ENCODE measurements at regions of chr17 and their contacts with region 1.

Region 1: GRCh38 chr17:68435876-68436842 is 21.1 kb downstream of the WIPI1 start:
- DNase-seq: peak; percentile 71 to 91 (median 87)
- ATAC-seq: peak; percentile 83
- H3K4me3 ChIP-seq: no peak overlapping the region
- H3K4me3 Mint-ChIP-seq: peak overlapping the region; percentile 51
- H3K27ac ChIP-seq: no peak overlapping the region
- H3K27ac Mint-ChIP-seq: peak overlapping the region; percentile 81
- H3K4me1 ChIP-seq: peaks cover 30% of the 10 kb centered on the region
- H3K4me1 Mint-ChIP-seq: peaks cover 50% of the 10 kb centered on the region
- H3K27me3 ChIP-seq: no peaks in the 10 kb centered on the region
- H3K27me3 Mint-ChIP-seq: no peaks in the 10 kb centered on the region
- CTCF ChIP-seq: peak; percentile 96

Region 2: DNA sequence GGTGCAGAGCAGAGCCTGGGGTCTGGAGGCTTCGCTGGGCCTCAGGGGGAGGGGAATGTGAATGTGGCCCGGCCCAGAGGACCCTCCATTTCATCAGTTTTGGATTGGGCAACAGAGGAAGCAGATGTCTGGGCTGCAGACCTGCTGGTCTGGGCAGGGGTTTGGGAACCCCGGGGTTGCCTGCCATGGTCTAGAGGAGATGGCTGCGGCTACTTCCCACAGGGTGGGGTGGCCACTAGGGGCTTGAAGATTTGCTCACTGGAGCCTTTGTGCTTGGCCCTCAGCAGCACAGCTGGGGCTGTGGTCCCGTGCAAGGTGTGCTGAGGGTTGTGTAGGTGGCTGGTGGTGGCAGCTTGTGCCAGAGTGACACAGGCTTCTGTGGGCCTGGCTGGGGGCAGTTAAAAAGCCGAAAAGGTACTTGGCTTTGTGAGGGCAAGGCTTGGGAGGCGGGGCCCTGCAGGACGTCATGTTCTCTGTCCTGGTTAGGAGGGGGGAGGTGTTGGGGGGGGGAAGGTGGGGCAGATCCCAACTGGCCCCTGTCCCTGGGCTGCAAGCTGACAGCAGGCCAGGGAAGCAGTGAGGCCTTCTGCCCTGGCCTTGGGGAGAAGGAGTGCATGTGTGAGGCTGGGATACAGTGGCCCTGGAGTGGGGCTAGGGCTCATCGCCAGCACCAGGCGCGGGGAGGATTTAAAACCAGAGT is 302.7 kb before region 1 on chr17:
- CTCF ChIA-PET with region 1: no interaction called
- POLR2A ChIA-PET with region 1: no interaction called
- intact Hi-C with region 1: no loop called
- DNase-seq: no peak
- ATAC-seq: no peak
- H3K4me3 ChIP-seq: no peak overlapping the region
- H3K4me3 Mint-ChIP-seq: no peak overlapping the region
- H3K27ac ChIP-seq: no peak overlapping the region
- H3K27ac Mint-ChIP-seq: no peak overlapping the region
- H3K4me1 ChIP-seq: no peaks in the 10 kb centered on the region
- H3K4me1 Mint-ChIP-seq: no peaks in the 10 kb centered on the region
- H3K27me3 ChIP-seq: no peaks in the 10 kb centered on the region
- H3K27me3 Mint-ChIP-seq: no peaks in the 10 kb centered on the region
- CTCF ChIP-seq: no peak

Region 3: DNA sequence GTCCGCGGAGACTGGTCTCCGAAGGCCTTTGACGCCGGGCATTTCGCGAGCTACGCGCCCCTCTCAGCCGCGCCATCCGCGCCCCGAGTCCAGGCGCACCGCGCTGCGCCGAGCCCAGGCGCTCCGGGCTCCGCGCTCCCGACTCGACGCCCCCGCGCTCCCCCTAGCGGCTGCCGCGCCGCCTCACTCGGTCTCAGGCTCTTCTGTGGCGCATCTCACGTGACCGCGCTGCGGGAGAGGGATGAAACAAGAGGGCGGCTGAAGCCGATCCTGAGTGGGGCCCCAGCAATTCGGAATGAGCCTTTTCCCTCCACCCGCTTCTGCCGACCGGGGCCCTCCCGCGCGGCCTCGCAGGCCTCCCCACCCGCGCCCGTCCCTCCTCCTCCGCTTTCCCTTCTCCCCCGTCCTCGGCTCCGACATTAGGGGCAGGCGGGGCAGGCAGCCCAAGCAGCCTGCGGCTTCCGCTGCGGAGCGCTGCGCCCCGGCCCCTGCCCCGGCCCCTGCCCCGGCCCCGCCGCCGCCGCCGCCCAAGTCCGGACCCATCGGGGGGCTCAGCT is 230.8 kb before region 1 on chr17:
- CTCF ChIA-PET with region 1: interaction called, 4 read pairs
- POLR2A ChIA-PET with region 1: interaction called, 7 read pairs
- intact Hi-C with region 1: loop called in 1 of 2 experiments (anchors 2 kb)
- DNase-seq: peak; percentile 87 to 96 (median 93)
- ATAC-seq: peak; percentile 70
- H3K4me3 ChIP-seq: peak overlapping the region; percentile 68 to 78
- H3K4me3 Mint-ChIP-seq: peak overlapping the region; percentile 88
- H3K27ac ChIP-seq: peak overlapping the region; percentile 77 to 78
- H3K27ac Mint-ChIP-seq: peak overlapping the region; percentile 93
- H3K4me1 ChIP-seq: peaks cover 23% of the 10 kb centered on the region
- H3K4me1 Mint-ChIP-seq: peaks cover 37% of the 10 kb centered on the region
- H3K27me3 ChIP-seq: no peaks in the 10 kb centered on the region
- H3K27me3 Mint-ChIP-seq: no peaks in the 10 kb centered on the region
- CTCF ChIP-seq: peak; percentile 89

Region 4: DNA sequence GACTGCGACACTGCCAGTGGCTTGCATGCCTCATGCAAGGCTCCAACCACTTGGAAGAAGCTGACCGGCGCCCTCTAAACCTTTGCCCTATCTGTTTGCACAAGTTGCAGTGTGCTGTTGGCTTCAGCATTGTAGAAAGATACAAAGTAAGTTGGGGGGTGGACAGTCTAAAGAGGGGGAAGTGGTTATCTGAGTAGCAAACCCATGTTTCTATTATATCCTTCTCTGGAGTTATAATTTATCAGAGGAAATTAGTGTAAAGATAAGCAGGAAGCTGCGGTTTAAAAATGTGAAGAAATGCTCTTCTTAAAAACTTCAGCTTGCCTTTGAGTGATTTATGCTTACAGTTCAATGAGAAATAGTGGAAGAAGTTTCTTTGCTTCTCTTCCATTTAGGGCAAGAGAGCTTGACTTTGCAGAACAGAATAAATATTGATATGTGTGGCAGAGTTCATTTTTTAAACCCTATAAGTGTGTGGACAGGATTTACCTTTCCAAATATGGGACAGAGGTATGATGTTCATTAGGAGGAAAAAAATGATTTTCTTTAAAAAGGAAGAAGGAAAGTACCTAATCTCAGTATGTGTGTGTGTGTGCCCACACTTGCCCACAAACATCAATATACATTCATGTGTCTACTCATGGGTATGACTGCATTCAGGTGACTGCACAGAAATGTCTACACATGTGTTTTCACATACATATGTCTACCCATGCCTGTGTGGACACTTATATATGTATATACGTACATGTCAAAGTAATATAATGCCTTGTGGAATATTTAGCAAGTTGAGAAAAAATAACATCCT is 180.2 kb before region 1 on chr17:
- CTCF ChIA-PET with region 1: interaction called, 125 read pairs
- POLR2A ChIA-PET with region 1: interaction called, 3 read pairs
- intact Hi-C with region 1: no loop called
- DNase-seq: peak in 3 of 9 experiments; percentile 33 to 74 (median 58)
- ATAC-seq: peak; percentile 22
- H3K4me3 ChIP-seq: no peak overlapping the region
- H3K4me3 Mint-ChIP-seq: peak overlapping the region; percentile 24
- H3K27ac ChIP-seq: peak overlapping the region; percentile 34 to 97
- H3K27ac Mint-ChIP-seq: peak overlapping the region; percentile 97
- H3K4me1 ChIP-seq: peaks cover 76% of the 10 kb centered on the region
- H3K4me1 Mint-ChIP-seq: peaks cover 82% of the 10 kb centered on the region
- H3K27me3 ChIP-seq: no peaks in the 10 kb centered on the region
- H3K27me3 Mint-ChIP-seq: no peaks in the 10 kb centered on the region
- CTCF ChIP-seq: no peak

Region 5: DNA sequence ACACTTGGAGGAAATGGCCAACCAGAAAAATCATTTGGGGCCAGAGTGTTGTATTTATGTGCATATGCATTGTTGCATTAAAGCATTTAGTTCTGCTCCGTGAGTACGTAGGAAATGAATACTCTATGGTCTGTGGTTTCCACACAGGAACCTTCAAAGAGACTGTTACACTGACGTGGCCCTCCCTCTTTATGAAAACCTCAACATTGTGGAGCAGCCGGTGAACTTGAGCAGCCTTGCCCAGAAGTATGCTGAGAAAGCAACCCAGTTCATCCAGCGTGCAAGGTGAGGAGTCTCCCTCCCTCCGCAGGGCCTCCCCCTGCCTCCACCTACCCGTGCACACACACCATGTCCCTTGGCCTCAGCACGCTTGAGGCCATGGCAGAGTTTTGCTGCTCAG is 79.6 kb before region 1 on chr17:
- CTCF ChIA-PET with region 1: interaction called, 3 read pairs
- POLR2A ChIA-PET with region 1: no interaction called
- intact Hi-C with region 1: loop called in 1 of 2 experiments (anchors 5 kb)
- DNase-seq: peak; percentile 44 to 93 (median 69)
- ATAC-seq: peak; percentile 91
- H3K4me3 ChIP-seq: peak overlapping the region; percentile 7 to 12
- H3K4me3 Mint-ChIP-seq: peak overlapping the region; percentile 72
- H3K27ac ChIP-seq: peak overlapping the region; percentile 14 to 45
- H3K27ac Mint-ChIP-seq: peak overlapping the region; percentile 83
- H3K4me1 ChIP-seq: peaks cover 51% of the 10 kb centered on the region
- H3K4me1 Mint-ChIP-seq: peaks cover 57% of the 10 kb centered on the region
- H3K27me3 ChIP-seq: no peaks in the 10 kb centered on the region
- H3K27me3 Mint-ChIP-seq: no peaks in the 10 kb centered on the region
- CTCF ChIP-seq: no peak

Region 6: GRCh38 chr17:68446626-68447041 is 10.5 kb after region 1 on chr17:
- CTCF ChIA-PET with region 1: interaction called, 215 read pairs
- POLR2A ChIA-PET with region 1: interaction called, 6 read pairs
- intact Hi-C with region 1: no loop called
- DNase-seq: no peak
- ATAC-seq: no peak
- H3K4me3 ChIP-seq: no peak overlapping the region
- H3K4me3 Mint-ChIP-seq: no peak overlapping the region
- H3K27ac ChIP-seq: no peak overlapping the region
- H3K27ac Mint-ChIP-seq: no peak overlapping the region
- H3K4me1 ChIP-seq: no peaks in the 10 kb centered on the region
- H3K4me1 Mint-ChIP-seq: peaks cover 1% of the 10 kb centered on the region
- H3K27me3 ChIP-seq: no peaks in the 10 kb centered on the region
- H3K27me3 Mint-ChIP-seq: no peaks in the 10 kb centered on the region
- CTCF ChIP-seq: no peak